Naive thymus-derived CD8-positive, alpha-beta T cell (primary cell): ENCODE measurements at regions of chr16 and their contacts with region 1.

Region 1: DNA sequence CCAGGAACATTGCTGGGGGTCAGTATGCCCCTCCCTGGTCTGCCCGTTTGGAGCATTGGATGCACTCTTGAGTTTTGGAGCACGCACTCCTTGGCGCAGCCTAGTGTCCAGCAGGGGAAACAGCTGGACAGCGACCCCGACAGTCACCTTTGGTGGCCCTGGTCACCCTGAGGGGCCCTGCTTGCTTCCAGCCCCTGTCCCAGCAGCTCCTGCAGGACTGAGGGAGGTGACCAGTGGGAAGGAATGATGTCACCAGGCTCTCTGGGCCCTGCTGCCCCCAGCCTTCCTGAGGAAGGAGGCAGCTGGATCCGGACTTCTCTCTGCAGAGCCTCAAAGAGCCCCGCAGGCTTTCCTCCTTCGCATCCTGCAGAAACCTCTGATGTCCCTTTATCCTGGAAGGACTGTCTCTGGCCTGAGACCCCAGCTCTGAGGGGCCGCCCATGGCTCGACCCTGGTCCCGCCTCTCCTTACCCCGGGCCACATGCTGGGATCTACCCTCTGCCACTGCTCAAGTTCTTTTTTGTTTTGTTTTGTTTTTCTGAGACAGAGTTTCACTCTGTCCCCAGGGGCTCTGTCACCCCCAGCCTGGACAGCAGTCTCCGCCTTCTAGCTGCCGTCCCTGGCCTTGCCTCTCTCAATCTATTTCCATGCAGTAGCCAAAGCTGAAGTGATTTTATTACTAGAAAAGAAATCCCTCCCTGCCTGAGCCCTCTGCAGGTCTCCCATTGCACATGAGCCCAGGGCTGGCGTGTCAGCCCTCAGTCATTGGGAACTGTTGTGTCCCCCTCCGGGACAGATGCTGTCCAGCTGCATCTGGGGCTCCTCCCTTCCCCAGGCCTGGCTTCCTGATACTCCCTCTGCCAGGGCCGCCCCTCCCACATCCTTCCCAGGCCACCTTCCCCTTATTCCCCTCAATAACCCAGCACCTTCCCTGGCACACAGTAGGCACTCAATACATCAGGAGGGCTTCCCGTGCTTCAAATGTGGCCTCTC is 11.6 kb downstream of the ZSCAN10 start:
- DNase-seq: no peak
- ATAC-seq: no peak
- H3K4me3 Mint-ChIP-seq: peak overlapping the region in 7 of 10 donors; percentile 6 to 70 (median 49)
- H3K27ac Mint-ChIP-seq: peak overlapping the region in 7 of 10 donors; percentile 41 to 91 (median 61)
- H3K4me1 Mint-ChIP-seq: peaks cover 17 to 54% (median 40%) of the 10 kb centered on the region in 4 donors
- H3K27me3 Mint-ChIP-seq: no peaks in the 10 kb centered on the region

Region 2: GRCh38 chr16:3065069-3065741 is 22.3 kb before region 1 on chr16 and contains the start of gene IL32:
- POLR2A ChIA-PET with region 1: interaction called, 12 read pairs
- DNase-seq: peak in 9 of 10 donors; percentile 38 to 73 (median 59)
- ATAC-seq: peak; percentile 55
- H3K4me3 Mint-ChIP-seq: peak within 1 kb of the TSS; percentile 97 to 100 (median 100)
- H3K27ac Mint-ChIP-seq: peak within 1 kb of the TSS; percentile 97 to 100 (median 98)
- H3K4me1 Mint-ChIP-seq: peaks cover 29 to 69% (median 63%) of the 10 kb centered on the region in 4 donors
- H3K27me3 Mint-ChIP-seq: no peaks in the 10 kb centered on the region
- polyA plus RNA-seq, gene IL32: 1,686 to 2,118 (median 1,952) TPM

Region 3: GRCh38 chr16:3074860-3075522 is 12.5 kb before region 1 on chr16:
- POLR2A ChIA-PET with region 1: interaction called, 92 read pairs
- DNase-seq: peak; percentile 37 to 93 (median 82)
- ATAC-seq: peak; percentile 91 to 96
- H3K4me3 Mint-ChIP-seq: peak overlapping the region; percentile 58 to 89 (median 82)
- H3K27ac Mint-ChIP-seq: peak overlapping the region; percentile 92 to 100 (median 98)
- H3K4me1 Mint-ChIP-seq: peaks cover 53 to 89% (median 87%) of the 10 kb centered on the region in 4 donors
- H3K27me3 Mint-ChIP-seq: no peaks in the 10 kb centered on the region

Region 4: DNA sequence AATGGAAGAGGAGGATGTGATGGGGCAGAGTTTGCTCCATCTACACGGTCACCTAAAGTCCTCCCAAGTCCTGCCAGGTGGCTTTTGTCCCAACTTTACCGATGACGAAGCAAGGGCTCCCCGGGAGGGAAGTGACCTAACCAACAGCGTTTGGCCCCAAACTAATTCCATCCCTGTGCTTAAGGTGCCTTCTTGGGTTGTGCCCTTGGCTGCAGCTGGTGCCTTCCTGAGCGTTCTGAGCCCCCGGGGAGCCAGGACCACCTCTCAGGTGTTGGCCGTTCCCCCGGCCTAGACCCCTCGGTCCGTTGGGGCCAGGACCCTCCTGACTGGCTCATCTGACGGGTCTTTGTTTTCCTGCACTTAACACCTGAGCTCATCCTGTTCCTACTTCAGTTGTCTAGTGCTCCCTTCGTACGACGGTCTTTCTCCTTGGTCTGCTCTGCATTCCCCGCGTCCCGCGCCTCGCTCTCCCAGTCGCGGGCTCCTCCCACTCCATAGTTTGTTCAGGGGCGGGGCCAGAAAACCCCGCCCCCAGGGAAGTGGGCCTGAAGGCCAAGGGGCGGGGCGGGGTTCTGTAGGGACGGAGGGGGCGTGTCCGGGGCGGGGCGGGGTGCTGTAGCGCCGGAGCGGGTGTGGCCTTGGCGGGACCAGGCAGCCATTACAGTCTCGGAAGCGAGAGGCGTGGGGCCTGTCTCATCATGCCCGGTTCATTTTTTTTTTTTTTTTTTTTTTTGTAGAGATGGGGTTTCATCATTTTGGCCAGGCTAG is 12.4 kb after region 1 on chr16:
- POLR2A ChIA-PET with region 1: interaction called, 25 read pairs
- DNase-seq: peak; percentile 68 to 93 (median 78)
- ATAC-seq: peak; percentile 78 to 86
- H3K4me3 Mint-ChIP-seq: peak overlapping the region; percentile 70 to 87 (median 78)
- H3K27ac Mint-ChIP-seq: peak overlapping the region in 9 of 10 donors; percentile 46 to 90 (median 79)
- H3K4me1 Mint-ChIP-seq: peaks cover 24 to 60% (median 58%) of the 10 kb centered on the region in 4 donors
- H3K27me3 Mint-ChIP-seq: no peaks in the 10 kb centered on the region